PC-9 (cell line): ENCODE measurements at regions of chr7 and their contacts with region 1.

Region 1: DNA sequence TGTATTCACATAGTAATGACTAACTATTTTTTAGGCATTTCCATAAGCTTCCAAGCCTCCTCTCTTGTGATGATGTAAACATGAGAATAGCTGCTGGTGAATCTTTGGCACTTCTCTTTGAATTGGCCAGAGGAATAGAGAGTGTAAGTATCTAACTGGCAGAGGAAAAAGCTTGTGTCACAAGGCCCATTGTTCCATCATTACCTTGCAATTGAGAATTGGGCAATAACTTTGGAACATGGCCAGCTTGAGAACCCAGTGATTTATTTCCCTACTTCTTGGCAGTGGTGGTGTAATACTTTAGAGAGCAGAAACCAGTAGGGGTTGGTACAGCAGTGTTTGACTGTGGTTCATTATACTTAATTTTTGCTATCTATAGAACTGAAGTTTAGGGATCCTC is 12.0 kb downstream of the IFRD1 start:
- DNase-seq: peak; percentile 40 to 65
- H3K4me3 ChIP-seq: no peak overlapping the region
- H3K27ac ChIP-seq: peak overlapping the region; percentile 52
- H3K4me1 ChIP-seq: 0 out of 2 replicates have a peak, but pooled peaks cover 8% of the 10 kb centered on the region
- H3K27me3 ChIP-seq: no peaks in the 10 kb centered on the region
- CTCF ChIP-seq: no peak

Region 2: GRCh38 chr7:111312964-111313363 is 1149.3 kb before region 1 on chr7:
- CTCF ChIA-PET with region 1: no interaction called
- POLR2A ChIA-PET with region 1: no interaction called
- intact Hi-C with region 1: no loop called
- DNase-seq: no peak
- H3K4me3 ChIP-seq: no peak overlapping the region
- H3K27ac ChIP-seq: no peak overlapping the region
- H3K4me1 ChIP-seq: no peaks in the 10 kb centered on the region
- H3K27me3 ChIP-seq: no peaks in the 10 kb centered on the region
- CTCF ChIP-seq: no peak

Region 3: GRCh38 chr7:112442217-112442616 is 20.0 kb before region 1 on chr7:
- CTCF ChIA-PET with region 1: no interaction called
- POLR2A ChIA-PET with region 1: interaction called, 13 read pairs
- intact Hi-C with region 1: no loop called
- DNase-seq: no peak
- H3K4me3 ChIP-seq: no peak overlapping the region
- H3K27ac ChIP-seq: no peak overlapping the region
- H3K4me1 ChIP-seq: no peaks in the 10 kb centered on the region
- H3K27me3 ChIP-seq: no peaks in the 10 kb centered on the region
- CTCF ChIP-seq: no peak